ENCODE measurements at regions of chr3 and their contacts with region 1.

Region 1: GRCh38 chr3:169218314-169218983 is 445.1 kb downstream of the MECOM start:
- DNase-seq: peak; percentile 82
- ATAC-seq: peak; percentile 99
- H3K4me3 ChIP-seq: no peak overlapping the region
- H3K27ac ChIP-seq: no peak overlapping the region
- H3K4me1 ChIP-seq: peaks cover 5% of the 10 kb centered on the region; the same call in 1 of the 2 replicates
- H3K27me3 ChIP-seq: no peaks in the 10 kb centered on the region
- CTCF ChIP-seq: peak; percentile 86

Region 2: GRCh38 chr3:169158379-169158778 is 60.1 kb before region 1 on chr3:
- CTCF ChIA-PET with region 1: no interaction called
- POLR2A ChIA-PET with region 1: no interaction called
- intact Hi-C with region 1: no loop called
- DNase-seq: no peak
- ATAC-seq: no peak
- H3K4me3 ChIP-seq: no peak overlapping the region
- H3K27ac ChIP-seq: no peak overlapping the region
- H3K4me1 ChIP-seq: peaks cover 12% of the 10 kb centered on the region
- H3K27me3 ChIP-seq: no peaks in the 10 kb centered on the region
- CTCF ChIP-seq: no peak

Region 3: GRCh38 chr3:169241630-169241990 is 23.2 kb after region 1 on chr3:
- CTCF ChIA-PET with region 1: no interaction called
- POLR2A ChIA-PET with region 1: no interaction called
- intact Hi-C with region 1: no loop called
- DNase-seq: no peak
- ATAC-seq: no peak
- H3K4me3 ChIP-seq: no peak overlapping the region
- H3K27ac ChIP-seq: no peak overlapping the region
- H3K4me1 ChIP-seq: no peaks in the 10 kb centered on the region
- H3K27me3 ChIP-seq: no peaks in the 10 kb centered on the region
- CTCF ChIP-seq: no peak

Region 4: GRCh38 chr3:169283951-169284350 is 65.5 kb after region 1 on chr3:
- CTCF ChIA-PET with region 1: no interaction called
- POLR2A ChIA-PET with region 1: no interaction called
- intact Hi-C with region 1: loop called (anchors 5 kb)
- DNase-seq: no peak
- ATAC-seq: no peak
- H3K4me3 ChIP-seq: no peak overlapping the region
- H3K27ac ChIP-seq: no peak overlapping the region
- H3K4me1 ChIP-seq: peaks cover 35% of the 10 kb centered on the region
- H3K27me3 ChIP-seq: no peaks in the 10 kb centered on the region
- CTCF ChIP-seq: no peak

Region 5: GRCh38 chr3:169323578-169324451 is 105.4 kb after region 1 on chr3:
- CTCF ChIA-PET with region 1: interaction called, 6 read pairs
- POLR2A ChIA-PET with region 1: no interaction called
- intact Hi-C with region 1: loop called (anchors 1 kb)
- DNase-seq: no peak
- ATAC-seq: no peak
- H3K4me3 ChIP-seq: no peak overlapping the region
- H3K27ac ChIP-seq: no peak overlapping the region
- H3K4me1 ChIP-seq: peaks cover 34% of the 10 kb centered on the region
- H3K27me3 ChIP-seq: no peaks in the 10 kb centered on the region
- CTCF ChIP-seq: no peak

Region 6: DNA sequence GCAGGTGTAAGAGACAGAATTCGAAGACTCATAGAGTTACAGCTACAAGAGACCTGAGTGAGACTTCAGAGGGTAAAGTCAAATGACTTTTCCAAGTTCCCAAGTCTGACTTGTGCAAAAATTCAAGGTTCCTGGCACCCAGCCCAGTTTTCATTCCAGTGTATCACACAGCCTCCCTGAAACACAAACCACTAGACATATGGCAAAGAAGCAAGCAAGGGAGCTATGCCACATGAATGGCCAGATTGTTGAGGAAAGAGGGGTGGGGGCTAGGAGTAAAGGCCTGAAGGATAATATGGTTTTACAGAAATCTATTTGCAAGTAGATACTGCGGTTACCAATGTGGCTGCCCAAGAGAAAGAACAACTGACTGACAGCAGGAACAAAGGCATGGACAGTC is 143.9 kb after region 1 on chr3:
- CTCF ChIA-PET with region 1: no interaction called
- POLR2A ChIA-PET with region 1: no interaction called
- intact Hi-C with region 1: loop called (anchors 1 kb)
- DNase-seq: peak; percentile 48
- ATAC-seq: no peak
- H3K4me3 ChIP-seq: no peak overlapping the region
- H3K27ac ChIP-seq: no peak overlapping the region
- H3K4me1 ChIP-seq: no peaks in the 10 kb centered on the region
- H3K27me3 ChIP-seq: no peaks in the 10 kb centered on the region
- CTCF ChIP-seq: no peak

Region 7: GRCh38 chr3:169497567-169498257 is 279.3 kb after region 1 on chr3:
- CTCF ChIA-PET with region 1: no interaction called
- POLR2A ChIA-PET with region 1: no interaction called
- intact Hi-C with region 1: loop called (anchors 2 kb)
- DNase-seq: peak; percentile 95
- ATAC-seq: peak; percentile 91
- H3K4me3 ChIP-seq: peak overlapping the region; percentile 12; the same call in 1 of the 2 replicates
- H3K27ac ChIP-seq: peak overlapping the region; percentile 44
- H3K4me1 ChIP-seq: peaks cover 19% of the 10 kb centered on the region
- H3K27me3 ChIP-seq: no peaks in the 10 kb centered on the region
- CTCF ChIP-seq: no peak

Region 8: DNA sequence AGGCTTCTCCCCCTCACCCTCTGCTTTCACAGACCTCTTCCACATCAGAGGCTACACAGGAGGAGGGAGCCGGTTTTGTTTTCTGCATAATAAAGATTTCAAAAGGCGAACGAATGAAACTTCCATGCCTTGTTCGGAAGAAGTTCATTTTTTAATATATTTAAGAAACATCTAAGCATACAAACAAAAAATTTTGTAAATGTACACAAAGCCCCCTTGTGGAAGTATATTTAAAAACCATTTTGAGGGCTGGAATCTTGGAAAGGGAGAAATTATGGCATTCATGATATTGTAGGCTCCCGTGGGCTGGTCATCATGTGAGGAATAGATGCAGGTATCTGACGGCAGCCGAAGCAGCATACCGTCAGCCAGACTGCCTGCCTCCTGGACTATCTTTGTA is 354.7 kb after region 1 on chr3:
- CTCF ChIA-PET with region 1: no interaction called
- POLR2A ChIA-PET with region 1: interaction called, 3 read pairs
- intact Hi-C with region 1: loop called (anchors 5 kb)
- DNase-seq: peak; percentile 48
- ATAC-seq: no peak
- H3K4me3 ChIP-seq: no peak overlapping the region
- H3K27ac ChIP-seq: no peak overlapping the region
- H3K4me1 ChIP-seq: peaks cover 13% of the 10 kb centered on the region
- H3K27me3 ChIP-seq: no peaks in the 10 kb centered on the region
- CTCF ChIP-seq: peak; percentile 57

Measured in PC-3 (cell line).